ACHN (cell line): ENCODE measurements at regions of chr6 and their contacts with region 1.

Region 1: DNA sequence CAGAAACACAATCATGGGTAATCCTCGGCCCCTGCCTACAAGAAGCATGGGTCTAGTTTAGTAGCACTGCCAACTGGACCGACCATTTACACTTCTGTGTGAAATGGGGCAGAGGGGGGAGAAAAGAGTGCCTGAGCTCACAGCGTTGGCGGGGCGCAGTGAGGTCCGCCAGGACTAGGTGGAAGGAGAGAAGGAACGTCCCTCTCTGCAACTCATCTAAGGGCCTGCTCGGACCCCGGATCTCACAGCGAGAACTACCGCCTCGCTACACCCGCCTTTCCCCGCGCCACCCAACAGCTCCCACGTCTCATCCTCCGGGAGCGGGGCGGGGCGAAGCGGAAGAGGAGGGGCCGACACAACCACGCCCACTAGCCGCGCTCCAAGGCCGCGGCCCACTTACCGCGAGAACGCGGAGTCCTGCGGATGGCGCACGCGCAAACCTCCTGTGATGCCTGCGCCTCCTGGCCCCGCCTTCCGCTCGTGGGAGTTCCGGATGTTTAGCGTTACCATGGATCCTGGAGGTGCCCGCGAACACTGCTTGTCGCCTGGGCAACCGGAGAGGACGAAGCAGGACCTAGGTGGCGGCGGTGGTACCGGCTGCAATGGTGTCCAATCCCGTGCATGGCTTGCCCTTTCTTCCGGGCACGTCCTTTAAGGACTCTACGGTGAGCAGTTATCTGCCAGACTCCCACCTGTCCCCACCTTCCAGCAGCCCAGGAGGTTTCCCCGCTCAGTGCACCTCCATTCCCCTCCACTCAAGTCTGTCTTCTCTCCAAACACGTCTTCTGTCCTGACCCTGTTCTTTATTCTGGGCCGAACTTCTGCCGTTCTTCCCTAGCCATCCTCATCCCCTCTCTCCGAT is at the start of gene EFHC1:
- DNase-seq: peak; percentile 97

Region 2: DNA sequence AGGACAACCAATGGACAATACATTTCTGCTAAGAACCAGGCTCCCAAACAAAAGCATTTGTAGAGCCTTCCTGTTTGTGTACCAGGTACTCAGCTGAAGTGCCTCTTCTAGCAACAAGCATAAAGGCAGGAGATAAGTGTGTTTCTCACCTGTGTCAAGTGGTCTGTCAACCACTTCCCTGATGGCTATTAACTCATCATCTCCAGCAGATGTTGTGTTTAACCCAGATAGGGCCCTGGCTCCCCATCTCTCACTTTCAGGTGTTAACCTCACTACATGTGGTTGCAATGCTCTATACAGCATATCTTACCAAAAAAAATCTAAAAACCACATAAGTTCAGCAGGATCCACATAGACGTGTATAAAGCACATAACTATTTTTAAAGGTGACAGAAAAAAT is 243.5 kb before region 1 on chr6:
- in situ Hi-C with region 1: no loop called
- DNase-seq: no peak

Region 3: GRCh38 chr6:52253494-52253893 is 166.5 kb before region 1 on chr6:
- in situ Hi-C with region 1: no loop called
- DNase-seq: no peak

Region 4: GRCh38 chr6:52546678-52547077 is 126.6 kb after region 1 on chr6:
- in situ Hi-C with region 1: no loop called
- DNase-seq: no peak

Region 5: GRCh38 chr6:52664186-52664990 is 244.3 kb after region 1 on chr6:
- in situ Hi-C with region 1: loop called (anchors 25 kb)
- DNase-seq: peak; percentile 94

Region 6: GRCh38 chr6:53244958-53245357 is 824.9 kb after region 1 on chr6:
- in situ Hi-C with region 1: no loop called
- DNase-seq: no peak